Activated B cell treated with CpG ODN at 0.5 μM for 24 hours (primary cell): ENCODE measurements at regions of chr17 and their contacts with region 1.

Region 1: DNA sequence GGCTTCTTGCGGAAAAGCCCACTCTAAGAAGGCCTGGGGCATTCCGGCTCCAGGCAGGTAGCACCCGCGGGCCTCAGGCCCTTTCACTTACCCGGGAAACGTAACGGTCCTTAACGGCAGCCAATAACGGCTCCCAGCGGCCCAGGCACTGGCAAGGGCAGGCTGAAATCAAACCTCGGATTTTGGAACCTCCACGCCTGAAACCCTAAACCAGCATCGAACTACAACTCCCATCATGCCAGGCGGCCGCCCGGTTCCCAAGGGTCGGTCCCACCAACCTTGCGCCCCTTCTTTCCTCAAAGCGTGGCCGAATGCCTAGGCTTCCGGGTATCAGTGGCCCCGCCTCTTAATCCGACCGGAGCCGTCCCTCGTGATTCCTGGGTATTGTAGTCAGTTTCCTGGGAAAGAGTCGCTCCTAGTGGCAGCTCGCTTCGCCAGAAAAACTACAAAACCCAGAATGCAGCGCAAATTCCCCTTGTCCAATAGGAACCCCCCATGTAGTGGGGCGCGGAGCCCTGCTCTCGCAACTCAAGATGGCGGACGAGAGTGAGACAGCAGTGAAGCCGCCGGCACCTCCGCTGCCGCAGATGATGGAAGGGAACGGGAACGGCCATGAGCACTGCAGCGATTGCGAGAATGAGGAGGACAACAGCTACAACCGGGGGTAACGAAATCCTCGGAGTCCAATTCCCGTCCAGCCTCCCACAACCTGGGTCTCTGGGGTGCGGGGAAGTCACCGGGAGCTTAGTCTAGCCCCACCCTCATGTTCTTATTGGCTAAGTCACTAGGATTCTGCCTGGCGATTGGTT is at the start of gene NMT1:
- DNase-seq: peak; percentile 86
- ATAC-seq: peak; percentile 90
- H3K4me3 Mint-ChIP-seq: peak within 1 kb of the TSS; percentile 100
- H3K27ac Mint-ChIP-seq: peak within 1 kb of the TSS; percentile 100
- H3K4me1 Mint-ChIP-seq: peaks cover 50% of the 10 kb centered on the region
- H3K27me3 Mint-ChIP-seq: no peaks in the 10 kb centered on the region
- CTCF ChIP-seq: no peak
- total RNA-seq, gene NMT1: 154 and 164 TPM in 2 replicates

Region 2: GRCh38 chr17:44556832-44557606 is 504.0 kb before region 1 on chr17 and contains the start of gene FZD2:
- CTCF ChIA-PET with region 1: no interaction called
- POLR2A ChIA-PET with region 1: no interaction called
- intact Hi-C with region 1: loop called (anchors 5 kb)
- DNase-seq: peak; percentile 64
- ATAC-seq: peak; percentile 84
- H3K4me3 Mint-ChIP-seq: peak within 1 kb of the TSS; percentile 95
- H3K27ac Mint-ChIP-seq: peak within 1 kb of the TSS; percentile 90
- H3K4me1 Mint-ChIP-seq: peaks cover 26% of the 10 kb centered on the region
- H3K27me3 Mint-ChIP-seq: peaks cover 25% of the 10 kb centered on the region
- CTCF ChIP-seq: no peak
- total RNA-seq, gene FZD2: 0.91 TPM in 2 replicates

Region 3: GRCh38 chr17:44968226-44969143 is 92.5 kb before region 1 on chr17 and contains the start of gene C1QL1:
- CTCF ChIA-PET with region 1: no interaction called
- POLR2A ChIA-PET with region 1: no interaction called
- intact Hi-C with region 1: loop called (anchors 5 kb)
- DNase-seq: peak; percentile 82
- ATAC-seq: peak; percentile 98
- H3K4me3 Mint-ChIP-seq: peak within 1 kb of the TSS; percentile 78
- H3K27ac Mint-ChIP-seq: no peak within 1 kb of the TSS
- H3K4me1 Mint-ChIP-seq: peaks cover 37% of the 10 kb centered on the region
- H3K27me3 Mint-ChIP-seq: peaks cover 44% of the 10 kb centered on the region
- CTCF ChIP-seq: no peak
- total RNA-seq, gene C1QL1: not detected in 2 replicates

Region 4: GRCh38 chr17:45031231-45032173 is 29.5 kb before region 1 on chr17:
- CTCF ChIA-PET with region 1: no interaction called
- POLR2A ChIA-PET with region 1: no interaction called
- intact Hi-C with region 1: no loop called
- DNase-seq: no peak
- ATAC-seq: no peak
- H3K4me3 Mint-ChIP-seq: no peak overlapping the region
- H3K27ac Mint-ChIP-seq: no peak overlapping the region
- H3K4me1 Mint-ChIP-seq: peaks cover 6% of the 10 kb centered on the region
- H3K27me3 Mint-ChIP-seq: no peaks in the 10 kb centered on the region
- CTCF ChIP-seq: no peak

Region 5: GRCh38 chr17:45135192-45135977 is 74.4 kb after region 1 on chr17 and contains the start of gene ACBD4:
- CTCF ChIA-PET with region 1: interaction called, 4 read pairs
- POLR2A ChIA-PET with region 1: interaction called, 9 read pairs
- intact Hi-C with region 1: loop called (anchors 5 kb)
- DNase-seq: peak; percentile 97
- ATAC-seq: peak; percentile 84
- H3K4me3 Mint-ChIP-seq: peak within 1 kb of the TSS; percentile 90
- H3K27ac Mint-ChIP-seq: peak within 1 kb of the TSS; percentile 84
- H3K4me1 Mint-ChIP-seq: peaks cover 16% of the 10 kb centered on the region
- H3K27me3 Mint-ChIP-seq: peaks cover 4% of the 10 kb centered on the region
- CTCF ChIP-seq: peak; percentile 99
- total RNA-seq, gene ACBD4: 20.1 and 20.6 TPM in 2 replicates

Region 6: DNA sequence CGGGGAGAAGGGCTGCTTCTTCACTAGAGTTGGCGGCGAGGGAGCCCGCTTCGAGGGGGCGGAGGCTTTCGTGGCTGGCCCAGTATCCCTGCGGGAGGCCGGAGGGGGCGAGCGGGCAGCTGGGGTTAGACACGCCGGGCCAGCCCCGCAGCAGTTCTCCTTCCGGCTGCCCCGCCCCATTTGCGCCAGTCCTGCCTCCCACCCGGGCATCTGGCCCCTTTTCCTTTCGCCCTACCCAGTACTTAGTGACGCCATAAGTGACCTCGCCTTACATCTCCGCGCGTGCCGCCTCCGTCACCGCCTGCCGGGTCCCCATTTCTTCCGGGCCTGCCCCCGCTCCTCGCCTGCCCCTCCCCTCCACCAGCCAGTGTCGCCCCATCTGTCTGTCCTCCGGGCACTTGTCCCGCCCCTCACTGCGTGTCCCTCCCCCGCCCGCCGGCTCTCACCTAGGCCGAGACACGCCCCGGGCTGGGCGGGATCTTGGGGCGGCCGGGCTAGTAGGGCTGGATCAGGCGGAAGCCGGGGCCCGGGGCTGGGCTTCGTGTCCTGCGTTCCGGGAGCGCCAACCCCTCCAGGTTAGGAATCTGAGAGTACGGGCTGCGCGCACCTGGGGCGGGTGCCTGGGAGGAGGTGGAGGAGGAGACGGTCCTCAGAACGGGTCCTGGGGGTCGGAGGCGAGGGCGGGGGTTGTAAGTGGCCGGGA is 186.6 kb after region 1 on chr17:
- CTCF ChIA-PET with region 1: no interaction called
- POLR2A ChIA-PET with region 1: no interaction called
- intact Hi-C with region 1: loop called (anchors 5 kb)
- DNase-seq: peak; percentile 87
- ATAC-seq: peak; percentile 92
- H3K4me3 Mint-ChIP-seq: peak overlapping the region; percentile 90
- H3K27ac Mint-ChIP-seq: peak overlapping the region; percentile 92
- H3K4me1 Mint-ChIP-seq: peaks cover 34% of the 10 kb centered on the region
- H3K27me3 Mint-ChIP-seq: no peaks in the 10 kb centered on the region
- CTCF ChIP-seq: no peak